Prostate gland (tissue), 2 donors: ENCODE measurements at regions of chr4 and their contacts with region 1.

Region 1: DNA sequence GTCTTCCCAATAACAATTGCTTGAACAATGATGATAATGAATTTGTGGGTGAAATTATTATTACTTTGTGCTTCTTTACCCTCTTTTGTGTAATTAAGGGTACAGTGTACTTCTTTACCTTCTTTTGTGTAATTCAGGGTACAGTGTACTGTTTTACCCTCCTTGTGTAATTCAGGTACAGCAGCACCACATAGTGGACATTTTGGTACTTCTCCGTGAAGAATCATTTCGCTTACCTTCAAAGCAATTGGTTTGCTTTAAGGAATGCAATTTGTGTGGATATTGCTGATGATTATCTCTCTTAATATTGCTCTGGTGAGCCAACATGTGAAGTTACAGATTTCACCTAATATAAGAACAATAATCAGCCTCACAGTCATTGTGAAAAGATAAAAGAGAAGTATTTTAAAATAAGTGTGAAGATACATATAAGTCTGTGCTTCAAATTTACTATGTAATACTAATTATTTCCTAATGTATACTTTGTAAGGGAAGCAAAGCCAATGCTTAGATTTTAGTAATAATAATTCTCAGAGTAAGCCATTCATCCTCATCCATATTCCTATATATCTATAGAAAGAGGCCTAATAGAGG is 27.2 kb upstream of the SEC24B start:
- DNase-seq: peak; percentile 34
- H3K4me3 ChIP-seq: no peak overlapping the region
- H3K27ac ChIP-seq: no peak overlapping the region
- H3K4me1 ChIP-seq: no peaks in the 10 kb centered on the region
- H3K27me3 ChIP-seq: no peaks in the 10 kb centered on the region
- CTCF ChIP-seq: peak in 3 of 4 experiments; percentile 62 to 75 (median 66)
- POLR2A ChIP-seq: no peak

Region 2: DNA sequence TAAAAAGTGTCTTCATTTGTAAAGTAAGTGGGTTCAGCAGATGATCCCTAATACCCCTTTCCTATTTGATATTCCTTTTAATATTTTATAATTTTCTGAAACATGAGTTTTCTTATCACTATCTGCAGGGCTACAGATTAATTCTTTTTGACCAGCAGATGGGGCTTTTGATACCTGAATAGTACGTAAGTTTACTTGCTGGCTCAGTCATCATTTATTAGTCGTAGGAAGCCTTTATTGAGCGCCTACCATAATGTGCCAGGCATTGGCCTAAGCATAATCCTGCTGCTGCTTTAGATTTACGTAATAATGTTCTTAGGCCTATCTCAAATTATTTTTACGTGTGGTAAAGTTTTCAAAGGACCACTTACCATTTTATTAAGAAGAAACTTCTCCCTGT is 723.0 kb before region 1 on chr4:
- intact Hi-C with region 1: loop called (anchors 10 kb)
- DNase-seq: no peak
- H3K4me3 ChIP-seq: no peak overlapping the region
- H3K27ac ChIP-seq: no peak overlapping the region
- H3K4me1 ChIP-seq: no peaks in the 10 kb centered on the region
- H3K27me3 ChIP-seq: no peaks in the 10 kb centered on the region
- CTCF ChIP-seq: peak in 3 of 4 experiments; percentile 35 to 40 (median 38)
- POLR2A ChIP-seq: no peak

Region 3: GRCh38 chr4:109134921-109135320 is 271.5 kb before region 1 on chr4:
- intact Hi-C with region 1: no loop called
- DNase-seq: no peak
- H3K4me3 ChIP-seq: no peak overlapping the region
- H3K27ac ChIP-seq: no peak overlapping the region
- H3K4me1 ChIP-seq: no peaks in the 10 kb centered on the region
- H3K27me3 ChIP-seq: no peaks in the 10 kb centered on the region
- CTCF ChIP-seq: no peak
- POLR2A ChIP-seq: no peak

Region 4: DNA sequence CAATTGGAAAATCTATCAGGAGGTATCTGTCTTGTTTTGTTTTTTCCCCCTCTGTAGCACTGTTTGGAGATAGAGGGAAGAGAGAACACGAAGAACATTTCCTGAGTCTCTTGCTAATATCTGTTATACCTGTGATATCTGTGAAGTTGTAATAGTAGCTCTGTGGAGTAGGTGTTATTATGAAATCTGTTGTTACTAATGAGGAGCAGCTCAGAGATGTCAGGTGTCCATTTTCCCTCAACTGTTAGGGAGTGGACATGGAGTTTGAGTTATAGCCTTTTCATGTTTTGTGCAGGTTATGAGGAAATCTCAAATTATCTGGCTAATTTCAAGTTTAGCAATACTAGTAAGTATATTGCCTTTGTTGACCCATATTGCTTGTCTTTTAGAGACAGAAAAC is 79.6 kb after region 1 on chr4:
- intact Hi-C with region 1: no loop called
- DNase-seq: no peak
- H3K4me3 ChIP-seq: no peak overlapping the region
- H3K27ac ChIP-seq: no peak overlapping the region
- H3K4me1 ChIP-seq: no peaks in the 10 kb centered on the region
- H3K27me3 ChIP-seq: no peaks in the 10 kb centered on the region
- CTCF ChIP-seq: no peak
- POLR2A ChIP-seq: no peak